ENCODE measurements at regions of chr7 and their contacts with region 1.

Region 1: DNA sequence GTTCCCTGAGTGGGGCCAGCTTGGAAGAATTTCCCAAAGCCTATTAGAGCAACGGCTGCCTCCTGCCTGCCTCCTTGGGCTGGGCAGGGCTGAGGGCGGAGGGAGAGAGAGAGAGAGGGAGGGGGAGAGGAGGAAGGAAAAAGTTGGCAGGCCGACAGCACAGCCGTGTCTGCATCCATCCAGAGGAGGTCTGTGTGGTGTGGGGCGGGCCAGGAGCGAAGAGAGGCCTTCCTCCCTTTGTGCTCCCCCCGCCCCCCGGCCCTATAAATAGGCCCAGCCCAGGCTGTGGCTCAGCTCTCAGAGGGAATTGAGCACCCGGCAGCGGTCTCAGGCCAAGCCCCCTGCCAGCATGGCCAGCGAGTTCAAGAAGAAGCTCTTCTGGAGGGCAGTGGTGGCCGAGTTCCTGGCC is at the start of gene AQP1:
- DNase-seq: peak; percentile 84 to 98
- H3K4me3 ChIP-seq: peak within 1 kb of the TSS; percentile 62 to 88
- H3K27ac ChIP-seq: peak within 1 kb of the TSS; percentile 92 to 97
- H3K4me1 ChIP-seq: peaks cover 23 to 50% of the 10 kb centered on the region in 2 donors
- H3K27me3 ChIP-seq: no peaks in the 10 kb centered on the region
- CTCF ChIP-seq: peak; percentile 6 to 45 (median 8)
- total RNA-seq, gene AQP1: 2,113 TPM

Region 2: GRCh38 chr7:30594549-30595435 is 316.8 kb before region 1 on chr7 and contains the start of gene GARS1:
- intact Hi-C with region 1: loop called (anchors 10 kb)
- DNase-seq: peak; percentile 65 to 94
- H3K4me3 ChIP-seq: peak within 1 kb of the TSS; percentile 86 to 96
- H3K27ac ChIP-seq: peak within 1 kb of the TSS; percentile 93 to 98
- H3K4me1 ChIP-seq: peaks cover 4 to 18% of the 10 kb centered on the region in 2 donors
- H3K27me3 ChIP-seq: no peaks in the 10 kb centered on the region
- CTCF ChIP-seq: no peak
- total RNA-seq, gene GARS1: 41.7 TPM

Region 3: GRCh38 chr7:30750683-30751650 is 160.6 kb before region 1 on chr7:
- intact Hi-C with region 1: loop called (anchors 5 kb)
- DNase-seq: peak in 1 of 2 donors; percentile 88
- H3K4me3 ChIP-seq: peak overlapping the region in 1 of 2 donors; percentile 71
- H3K27ac ChIP-seq: peak overlapping the region; percentile 81 to 91
- H3K4me1 ChIP-seq: peaks cover 2 to 48% of the 10 kb centered on the region in 2 donors
- H3K27me3 ChIP-seq: no peaks in the 10 kb centered on the region
- CTCF ChIP-seq: no peak

Region 4: DNA sequence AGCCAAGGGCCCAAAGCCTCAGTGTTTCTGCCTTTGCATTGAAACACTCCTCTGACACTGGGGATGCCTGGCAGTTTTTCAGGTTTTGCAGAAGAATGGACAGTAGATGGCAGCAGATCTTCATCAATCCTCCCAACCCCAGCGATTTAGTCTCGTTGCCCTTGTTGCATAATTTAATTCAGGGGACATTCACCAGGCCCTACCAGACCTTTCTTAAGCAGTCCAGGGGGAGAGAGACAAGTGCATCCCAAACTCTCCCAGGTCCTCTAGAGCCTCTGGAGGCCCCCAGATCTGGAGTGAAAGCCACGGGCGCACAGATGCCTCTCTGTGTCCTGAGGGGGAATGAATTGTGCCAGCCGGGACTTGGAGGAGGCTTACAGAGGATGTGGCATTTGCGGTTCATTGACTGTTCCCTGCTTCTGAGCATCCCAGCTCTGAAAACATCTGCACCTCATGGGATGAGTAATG is 110.7 kb before region 1 on chr7:
- intact Hi-C with region 1: loop called (anchors 1 kb)
- DNase-seq: peak in 1 of 2 donors; percentile 85
- H3K4me3 ChIP-seq: no peak overlapping the region
- H3K27ac ChIP-seq: peak overlapping the region; percentile 86 to 91
- H3K4me1 ChIP-seq: peaks cover 25 to 65% of the 10 kb centered on the region in 2 donors
- H3K27me3 ChIP-seq: no peaks in the 10 kb centered on the region
- CTCF ChIP-seq: peak; percentile 71 to 87 (median 76)

Region 5: GRCh38 chr7:30817371-30817767 is 94.2 kb before region 1 on chr7:
- intact Hi-C with region 1: loop called (anchors 2 kb)
- DNase-seq: peak in 1 of 2 donors; percentile 69
- H3K4me3 ChIP-seq: peak overlapping the region in 1 of 2 donors; percentile 11
- H3K27ac ChIP-seq: peak overlapping the region; percentile 95
- H3K4me1 ChIP-seq: peaks cover 24 to 61% of the 10 kb centered on the region in 2 donors
- H3K27me3 ChIP-seq: no peaks in the 10 kb centered on the region
- CTCF ChIP-seq: no peak

Region 6: GRCh38 chr7:30851651-30852307 is 59.8 kb before region 1 on chr7:
- intact Hi-C with region 1: loop called (anchors 2 kb)
- DNase-seq: peak; percentile 64 to 93
- H3K4me3 ChIP-seq: peak overlapping the region; percentile 7 to 46
- H3K27ac ChIP-seq: peak overlapping the region; percentile 98
- H3K4me1 ChIP-seq: peaks cover 15 to 57% of the 10 kb centered on the region in 2 donors
- H3K27me3 ChIP-seq: no peaks in the 10 kb centered on the region
- CTCF ChIP-seq: no peak

Region 7: DNA sequence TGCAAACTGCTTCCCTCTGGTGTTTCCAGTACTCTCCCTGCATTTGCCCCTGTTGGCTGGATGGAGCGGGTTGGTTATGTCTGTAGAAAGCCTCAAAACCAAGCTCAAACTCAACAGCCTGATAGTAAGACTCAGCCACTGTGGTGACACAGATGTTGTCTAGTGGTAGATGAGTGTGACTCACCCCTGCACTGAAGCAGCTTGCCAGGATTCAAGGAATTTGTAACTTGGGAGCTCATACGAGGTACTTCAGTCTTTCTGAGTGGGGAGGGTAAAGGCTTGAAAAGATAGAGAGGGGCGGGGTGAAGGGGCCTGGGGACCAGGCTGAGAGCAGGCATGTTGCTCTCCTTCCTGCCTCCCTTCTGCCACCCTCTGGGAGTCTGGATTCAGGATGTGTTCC is 22.8 kb before region 1 on chr7:
- intact Hi-C with region 1: loop called (anchors 1 kb)
- DNase-seq: peak in 1 of 2 donors; percentile 90
- H3K4me3 ChIP-seq: no peak overlapping the region
- H3K27ac ChIP-seq: peak overlapping the region; percentile 60 to 72
- H3K4me1 ChIP-seq: peaks cover 21 to 24% of the 10 kb centered on the region in 2 donors
- H3K27me3 ChIP-seq: no peaks in the 10 kb centered on the region
- CTCF ChIP-seq: no peak

Region 8: GRCh38 chr7:31027161-31027965 is 115.8 kb after region 1 on chr7:
- intact Hi-C with region 1: no loop called
- DNase-seq: no peak
- H3K4me3 ChIP-seq: no peak overlapping the region
- H3K27ac ChIP-seq: no peak overlapping the region
- H3K4me1 ChIP-seq: no peaks in the 10 kb centered on the region
- H3K27me3 ChIP-seq: no peaks in the 10 kb centered on the region
- CTCF ChIP-seq: no peak

Region 9: GRCh38 chr7:32221736-32222135 is 1310.2 kb after region 1 on chr7:
- intact Hi-C with region 1: no loop called
- DNase-seq: no peak
- H3K4me3 ChIP-seq: no peak overlapping the region
- H3K27ac ChIP-seq: no peak overlapping the region
- H3K4me1 ChIP-seq: no peaks in the 10 kb centered on the region
- H3K27me3 ChIP-seq: no peaks in the 10 kb centered on the region
- CTCF ChIP-seq: no peak